SK-N-SH (cell line): ENCODE measurements at regions of chr2 and their contacts with region 1.

Region 1: DNA sequence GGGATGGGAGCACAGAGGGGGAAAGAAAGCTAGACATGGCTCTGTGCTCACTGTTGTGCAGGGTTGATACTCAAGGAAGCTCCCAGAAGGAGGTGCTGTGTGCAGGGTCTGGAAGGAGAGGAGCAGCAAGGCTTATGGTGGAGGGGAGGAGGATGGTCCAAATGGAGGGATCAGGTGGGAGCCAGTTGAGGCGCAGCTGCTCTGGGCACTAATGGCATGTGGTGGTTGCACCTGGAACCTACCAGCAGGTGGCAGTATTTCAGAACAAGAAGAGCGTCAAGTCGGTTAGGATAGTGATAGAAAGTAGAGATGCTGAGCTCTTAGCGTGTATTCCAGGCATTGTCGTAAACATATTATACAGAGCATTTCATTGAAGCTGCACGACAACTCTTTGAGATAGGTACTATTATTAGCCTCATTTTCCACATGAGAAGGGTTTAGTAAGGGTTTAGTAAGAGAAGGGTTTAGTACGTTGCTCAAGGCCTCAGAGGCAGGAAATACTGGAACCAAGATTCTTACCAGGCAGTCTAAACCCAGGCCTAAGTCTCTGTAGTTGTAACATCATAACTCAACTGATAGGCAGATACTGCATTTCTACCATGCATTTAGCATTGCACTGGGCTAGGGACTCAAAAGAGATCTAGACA is 223.7 kb downstream of the CYP26B1 start:
- DNase-seq: peak; percentile 73
- H3K4me3 ChIP-seq: no peak overlapping the region
- H3K27ac ChIP-seq: no peak overlapping the region
- H3K4me1 ChIP-seq: peaks cover 0 to 6% of the 10 kb centered on the region in 2 experiments; a peak in 1 of 4 replicates
- H3K27me3 ChIP-seq: no peaks in the 10 kb centered on the region
- CTCF ChIP-seq: peak; percentile 75
- EP300 ChIP-seq: no peak
- RAD21 ChIP-seq: peak; percentile 88

Region 2: GRCh38 chr2:71545572-71546274 is 378.3 kb before region 1 on chr2:
- CTCF ChIA-PET with region 1: interaction called, 20 read pairs
- POLR2A ChIA-PET with region 1: no interaction called
- DNase-seq: peak; percentile 82
- H3K4me3 ChIP-seq: peak overlapping the region; percentile 12 to 19; a peak in 2 of 4 replicates
- H3K27ac ChIP-seq: no peak overlapping the region
- H3K4me1 ChIP-seq: no peaks in the 10 kb centered on the region; a peak in 1 of 4 replicates
- H3K27me3 ChIP-seq: no peaks in the 10 kb centered on the region; the same call in 1 of the 2 replicates
- CTCF ChIP-seq: peak; percentile 81
- EP300 ChIP-seq: no peak
- RAD21 ChIP-seq: peak; percentile 97

Region 3: DNA sequence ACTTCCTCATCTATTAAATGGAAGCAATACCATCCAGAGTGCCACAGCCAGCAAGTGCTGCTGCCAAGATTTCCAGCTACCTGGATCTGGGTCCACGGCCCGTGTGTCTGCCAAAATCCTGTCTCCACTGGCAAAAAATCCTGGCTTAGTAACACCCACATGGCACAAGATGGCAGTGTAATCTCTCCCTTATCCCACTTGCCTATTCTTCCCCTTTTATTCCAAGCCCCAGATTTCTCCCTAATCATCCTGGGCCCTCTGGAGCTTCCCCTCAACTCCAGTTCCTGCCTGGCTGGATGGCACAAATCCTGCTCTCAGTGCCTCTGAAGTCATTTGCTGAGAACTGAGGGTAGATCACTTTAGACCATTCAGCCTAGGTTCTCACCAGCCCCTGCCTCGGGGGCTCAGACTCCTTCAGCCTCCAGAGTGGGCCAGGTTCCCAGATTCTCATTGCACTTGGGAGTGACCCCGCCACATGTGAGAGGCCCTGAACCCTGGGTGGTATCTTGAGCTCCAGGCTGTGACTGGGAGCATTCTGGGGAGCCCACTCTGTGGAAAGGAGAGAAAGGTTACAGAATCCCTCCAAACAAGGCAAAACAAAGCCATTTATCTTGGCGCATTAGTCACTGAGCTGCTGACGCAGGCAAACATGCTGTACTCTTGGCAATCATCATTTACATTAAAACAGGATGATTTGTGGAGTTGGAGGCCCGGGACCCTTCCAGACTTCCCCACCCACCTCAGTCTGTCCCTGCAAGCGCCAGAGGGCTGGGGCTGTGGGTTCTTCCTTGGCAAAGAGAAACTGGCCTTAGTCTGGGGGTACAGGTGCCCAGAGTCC is 144.9 kb before region 1 on chr2:
- CTCF ChIA-PET with region 1: no interaction called
- POLR2A ChIA-PET with region 1: no interaction called
- DNase-seq: no peak
- H3K4me3 ChIP-seq: no peak overlapping the region
- H3K27ac ChIP-seq: no peak overlapping the region
- H3K4me1 ChIP-seq: no peaks in the 10 kb centered on the region
- H3K27me3 ChIP-seq: no peaks in the 10 kb centered on the region; the same call in 1 of the 2 replicates
- CTCF ChIP-seq: peak; percentile 38
- EP300 ChIP-seq: no peak
- RAD21 ChIP-seq: peak; percentile 44

Region 4: GRCh38 chr2:71833855-71834560 is 90.0 kb before region 1 on chr2:
- CTCF ChIA-PET with region 1: no interaction called
- POLR2A ChIA-PET with region 1: no interaction called
- DNase-seq: no peak
- H3K4me3 ChIP-seq: no peak overlapping the region
- H3K27ac ChIP-seq: no peak overlapping the region
- H3K4me1 ChIP-seq: peaks cover 0 to 25% of the 10 kb centered on the region in 2 experiments; a peak in 3 of 4 replicates
- H3K27me3 ChIP-seq: no peaks in the 10 kb centered on the region
- CTCF ChIP-seq: no peak
- EP300 ChIP-seq: no peak
- RAD21 ChIP-seq: no peak

Region 5: DNA sequence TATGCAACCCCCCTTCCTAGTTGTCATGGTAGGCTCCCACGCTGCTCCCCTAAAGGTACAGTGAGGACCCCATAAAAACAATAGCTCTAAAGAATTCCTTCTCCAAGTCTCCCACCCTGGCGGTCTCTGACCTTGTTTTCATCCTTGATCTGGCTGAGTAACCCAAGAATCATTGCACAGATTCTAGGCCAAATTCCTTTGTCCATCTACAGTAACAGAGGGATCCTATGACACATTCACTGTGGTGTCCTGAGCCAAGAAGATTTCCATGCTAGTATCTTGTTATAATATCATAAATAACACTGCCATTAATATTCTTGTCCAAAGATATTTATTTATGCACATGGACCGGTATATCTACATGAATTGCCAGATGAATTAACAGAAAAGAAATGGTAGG is 16.5 kb before region 1 on chr2:
- CTCF ChIA-PET with region 1: interaction called, 19 read pairs
- POLR2A ChIA-PET with region 1: no interaction called
- DNase-seq: no peak
- H3K4me3 ChIP-seq: no peak overlapping the region
- H3K27ac ChIP-seq: no peak overlapping the region
- H3K4me1 ChIP-seq: peaks cover 0 to 5% of the 10 kb centered on the region in 2 experiments; a peak in 1 of 4 replicates
- H3K27me3 ChIP-seq: no peaks in the 10 kb centered on the region
- CTCF ChIP-seq: no peak
- EP300 ChIP-seq: no peak
- RAD21 ChIP-seq: no peak

Region 6: DNA sequence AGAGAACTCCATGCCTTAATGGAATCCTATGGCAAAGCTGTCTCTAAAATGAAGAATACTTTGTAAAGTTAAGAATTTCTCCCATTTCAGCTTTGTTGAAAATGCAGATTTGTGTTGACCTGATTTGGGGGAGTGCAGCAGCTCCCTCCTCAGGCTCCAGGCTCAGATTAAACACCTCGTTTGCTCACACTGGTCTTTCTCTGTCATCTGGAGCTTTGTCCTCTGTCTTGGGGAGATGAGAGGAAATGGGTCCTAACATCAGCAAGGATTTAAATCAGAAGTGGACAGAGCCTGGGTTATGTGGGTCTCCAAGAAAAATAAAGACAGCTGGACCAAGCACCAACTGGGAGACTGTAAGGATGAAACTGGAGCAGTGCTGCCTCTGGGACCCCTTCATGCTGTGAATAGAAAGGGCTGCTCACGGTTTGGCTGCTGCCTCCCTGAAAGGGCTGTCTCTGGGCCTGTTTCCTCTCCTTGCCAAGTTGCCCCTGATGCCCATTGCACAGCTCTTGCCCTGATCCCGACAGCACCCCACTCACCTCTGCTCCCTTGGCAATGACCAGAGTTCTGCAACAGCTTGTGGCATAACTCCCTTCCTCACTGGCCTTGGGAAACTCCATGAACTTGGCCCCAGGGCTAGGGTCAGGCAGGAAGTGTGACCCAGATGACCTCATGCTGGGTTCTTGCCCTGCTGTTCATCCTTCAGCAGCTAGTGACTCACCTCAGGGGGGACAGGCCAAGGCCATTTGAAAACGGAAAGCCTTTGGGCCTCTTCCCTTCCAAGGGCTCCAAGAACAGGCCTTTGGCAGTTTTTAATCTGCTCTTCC is 26.5 kb after region 1 on chr2:
- CTCF ChIA-PET with region 1: interaction called, 27 read pairs
- POLR2A ChIA-PET with region 1: no interaction called
- DNase-seq: no peak
- H3K4me3 ChIP-seq: no peak overlapping the region
- H3K27ac ChIP-seq: no peak overlapping the region
- H3K4me1 ChIP-seq: no peaks in the 10 kb centered on the region
- H3K27me3 ChIP-seq: no peaks in the 10 kb centered on the region
- CTCF ChIP-seq: no peak
- EP300 ChIP-seq: no peak
- RAD21 ChIP-seq: no peak

Region 7: GRCh38 chr2:71995067-71995665 is 71.2 kb after region 1 on chr2:
- CTCF ChIA-PET with region 1: interaction called, 59 read pairs
- POLR2A ChIA-PET with region 1: no interaction called
- DNase-seq: peak; percentile 43
- H3K4me3 ChIP-seq: no peak overlapping the region
- H3K27ac ChIP-seq: no peak overlapping the region
- H3K4me1 ChIP-seq: no peaks in the 10 kb centered on the region
- H3K27me3 ChIP-seq: no peaks in the 10 kb centered on the region; the same call in 1 of the 2 replicates
- CTCF ChIP-seq: peak; percentile 56
- EP300 ChIP-seq: no peak
- RAD21 ChIP-seq: peak; percentile 74

Region 8: DNA sequence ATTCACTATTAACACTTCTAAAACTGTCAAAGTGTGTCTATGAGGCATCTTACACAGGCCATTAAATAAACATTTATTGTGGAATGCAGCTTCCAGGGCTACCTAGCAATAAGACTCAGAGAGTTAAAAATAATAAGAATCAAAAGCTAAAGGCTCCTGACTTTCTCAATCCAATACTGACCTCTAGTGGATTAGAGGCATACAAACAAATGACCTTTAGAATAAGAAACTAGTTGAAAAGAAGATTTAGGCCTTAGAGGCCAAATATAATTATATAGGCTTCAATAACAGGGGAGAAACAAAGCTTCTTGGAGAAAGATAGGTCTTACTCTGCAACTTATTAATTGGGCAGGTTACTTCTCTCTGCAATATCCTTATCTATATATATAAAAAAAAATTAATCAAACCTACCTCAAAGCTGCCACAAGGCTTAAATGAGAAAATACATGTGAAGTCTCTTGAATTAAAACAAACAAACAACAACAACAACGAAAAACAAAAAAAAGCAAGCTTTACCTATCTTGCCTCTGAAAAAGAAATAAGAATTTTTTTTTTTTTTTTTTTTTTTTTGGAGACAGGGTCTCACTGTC is 655.7 kb after region 1 on chr2:
- CTCF ChIA-PET with region 1: interaction called, 62 read pairs
- POLR2A ChIA-PET with region 1: no interaction called
- DNase-seq: peak; percentile 27
- H3K4me3 ChIP-seq: no peak overlapping the region
- H3K27ac ChIP-seq: no peak overlapping the region
- H3K4me1 ChIP-seq: peaks cover 0 to 31% of the 10 kb centered on the region in 2 experiments; a peak in 1 of 4 replicates
- H3K27me3 ChIP-seq: no peaks in the 10 kb centered on the region
- CTCF ChIP-seq: peak; percentile 83
- EP300 ChIP-seq: no peak
- RAD21 ChIP-seq: peak; percentile 88